ENCODE measurements at regions of chr3 and their contacts with region 1.

Region 1: DNA sequence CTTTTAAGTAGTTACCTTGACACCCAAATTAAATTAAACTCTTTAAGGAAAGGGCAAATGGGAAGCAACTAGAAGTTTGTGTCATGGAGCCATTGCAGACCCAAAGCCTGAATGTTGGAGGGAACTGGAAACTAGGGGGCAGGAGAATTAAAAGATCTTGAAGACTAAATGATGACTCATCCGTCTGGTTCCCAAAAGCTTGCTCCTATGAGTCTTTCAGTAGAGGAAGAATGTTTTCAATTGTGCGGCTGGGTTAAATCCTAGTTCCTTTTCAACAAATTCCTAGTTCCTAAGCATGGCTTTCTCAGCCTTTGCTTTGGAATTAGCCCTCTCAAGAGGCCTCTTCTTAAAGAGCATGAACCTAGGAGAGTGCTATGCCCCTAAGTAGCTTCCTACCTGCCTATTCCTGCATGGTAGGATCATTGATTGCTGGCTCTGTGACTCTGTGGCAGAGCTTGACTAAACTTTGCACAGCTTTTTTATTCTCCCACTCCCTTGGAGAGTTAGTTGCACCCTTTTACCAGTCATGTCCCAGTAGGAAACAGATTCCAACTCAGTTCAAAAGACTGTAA is 17.7 kb downstream of the CLEC3B start:
- DNase-seq: peak; percentile 78
- H3K4me3 Mint-ChIP-seq: no peak overlapping the region
- H3K27ac Mint-ChIP-seq: no peak overlapping the region
- H3K4me1 Mint-ChIP-seq: peaks cover 9% of the 10 kb centered on the region
- H3K27me3 Mint-ChIP-seq: no peaks in the 10 kb centered on the region
- CTCF ChIP-seq: no peak

Region 2: GRCh38 chr3:44065311-44066094 is 978.3 kb before region 1 on chr3:
- CTCF ChIA-PET with region 1: no interaction called
- POLR2A ChIA-PET with region 1: no interaction called
- intact Hi-C with region 1: no loop called
- DNase-seq: peak; percentile 96
- H3K4me3 Mint-ChIP-seq: no peak overlapping the region
- H3K27ac Mint-ChIP-seq: no peak overlapping the region
- H3K4me1 Mint-ChIP-seq: peaks cover 24% of the 10 kb centered on the region
- H3K27me3 Mint-ChIP-seq: no peaks in the 10 kb centered on the region
- CTCF ChIP-seq: no peak

Region 3: DNA sequence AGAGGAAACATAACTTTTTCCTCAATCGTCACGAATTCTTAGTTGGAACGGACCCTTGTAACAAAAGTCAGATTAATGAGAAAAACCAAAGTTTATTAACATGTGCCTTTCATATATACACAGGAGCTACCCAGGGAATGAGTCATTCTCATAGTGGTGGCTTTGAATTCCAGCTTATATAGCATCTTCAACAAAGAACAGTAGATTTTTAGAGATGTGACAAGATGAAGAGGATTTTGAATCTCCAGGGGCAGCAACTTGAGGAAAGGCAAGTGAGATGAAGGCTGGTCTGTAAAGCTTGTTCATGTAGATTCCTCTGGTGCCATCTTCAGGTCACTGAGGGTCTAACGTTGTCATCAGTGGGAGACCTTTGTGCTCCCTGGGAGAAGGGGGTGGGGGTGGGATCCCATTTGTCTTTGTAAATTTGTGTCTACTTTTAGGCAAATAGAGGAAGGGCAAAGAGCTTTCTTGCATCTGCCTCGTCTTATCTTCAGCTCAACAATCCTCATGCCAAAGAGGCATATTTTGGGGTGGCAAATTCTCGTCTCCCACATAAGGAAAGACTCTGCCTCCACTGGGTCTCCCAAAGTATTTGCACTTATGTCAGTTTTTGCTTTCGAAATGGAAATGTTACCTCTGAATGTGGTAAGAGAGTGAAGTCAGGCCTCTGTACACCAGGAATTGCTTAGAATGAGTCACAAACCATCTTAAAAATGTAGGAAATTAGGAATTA is 11.8 kb after region 1 on chr3:
- CTCF ChIA-PET with region 1: interaction called, 25 read pairs
- POLR2A ChIA-PET with region 1: interaction called, 37 read pairs
- intact Hi-C with region 1: no loop called
- DNase-seq: peak; percentile 51
- H3K4me3 Mint-ChIP-seq: no peak overlapping the region
- H3K27ac Mint-ChIP-seq: peak overlapping the region; percentile 43
- H3K4me1 Mint-ChIP-seq: peaks cover 49% of the 10 kb centered on the region
- H3K27me3 Mint-ChIP-seq: no peaks in the 10 kb centered on the region
- CTCF ChIP-seq: peak; percentile 11

Region 4: DNA sequence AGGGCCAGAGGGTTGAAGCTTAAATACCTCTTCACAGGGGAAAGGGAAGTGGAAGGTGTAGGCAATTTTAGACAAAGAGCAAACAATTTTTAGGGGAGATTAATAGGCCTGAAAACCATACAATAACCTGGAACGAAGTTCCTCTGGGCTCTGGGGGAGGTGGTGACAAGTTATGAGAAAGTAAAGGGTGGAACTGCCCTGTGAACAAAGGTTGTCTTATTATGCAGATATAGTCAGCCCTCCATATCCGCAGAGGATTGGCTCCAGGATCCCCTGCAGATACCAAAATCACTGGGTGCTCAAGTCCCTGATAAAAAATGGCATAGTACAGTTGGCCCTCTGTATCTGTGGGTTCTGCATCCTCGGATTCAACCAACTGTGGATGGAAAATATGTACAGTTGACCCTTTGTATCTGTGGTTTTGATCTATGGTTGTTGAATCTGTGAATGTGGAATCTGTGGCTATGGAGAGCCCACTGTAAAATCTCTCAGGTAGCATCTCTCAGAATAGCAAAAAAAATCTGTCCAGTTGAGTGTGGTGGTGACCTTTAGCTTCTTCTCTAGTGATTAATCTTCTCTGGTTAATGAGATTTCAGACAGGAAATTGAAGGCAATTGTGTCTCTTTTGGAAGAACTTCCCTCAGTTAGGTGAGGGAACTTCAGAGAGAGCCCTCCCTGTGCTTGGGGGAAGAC is 22.4 kb after region 1 on chr3:
- CTCF ChIA-PET with region 1: no interaction called
- POLR2A ChIA-PET with region 1: no interaction called
- intact Hi-C with region 1: no loop called
- DNase-seq: no peak
- H3K4me3 Mint-ChIP-seq: no peak overlapping the region
- H3K27ac Mint-ChIP-seq: no peak overlapping the region
- H3K4me1 Mint-ChIP-seq: peaks cover 10% of the 10 kb centered on the region
- H3K27me3 Mint-ChIP-seq: no peaks in the 10 kb centered on the region
- CTCF ChIP-seq: no peak

Region 5: DNA sequence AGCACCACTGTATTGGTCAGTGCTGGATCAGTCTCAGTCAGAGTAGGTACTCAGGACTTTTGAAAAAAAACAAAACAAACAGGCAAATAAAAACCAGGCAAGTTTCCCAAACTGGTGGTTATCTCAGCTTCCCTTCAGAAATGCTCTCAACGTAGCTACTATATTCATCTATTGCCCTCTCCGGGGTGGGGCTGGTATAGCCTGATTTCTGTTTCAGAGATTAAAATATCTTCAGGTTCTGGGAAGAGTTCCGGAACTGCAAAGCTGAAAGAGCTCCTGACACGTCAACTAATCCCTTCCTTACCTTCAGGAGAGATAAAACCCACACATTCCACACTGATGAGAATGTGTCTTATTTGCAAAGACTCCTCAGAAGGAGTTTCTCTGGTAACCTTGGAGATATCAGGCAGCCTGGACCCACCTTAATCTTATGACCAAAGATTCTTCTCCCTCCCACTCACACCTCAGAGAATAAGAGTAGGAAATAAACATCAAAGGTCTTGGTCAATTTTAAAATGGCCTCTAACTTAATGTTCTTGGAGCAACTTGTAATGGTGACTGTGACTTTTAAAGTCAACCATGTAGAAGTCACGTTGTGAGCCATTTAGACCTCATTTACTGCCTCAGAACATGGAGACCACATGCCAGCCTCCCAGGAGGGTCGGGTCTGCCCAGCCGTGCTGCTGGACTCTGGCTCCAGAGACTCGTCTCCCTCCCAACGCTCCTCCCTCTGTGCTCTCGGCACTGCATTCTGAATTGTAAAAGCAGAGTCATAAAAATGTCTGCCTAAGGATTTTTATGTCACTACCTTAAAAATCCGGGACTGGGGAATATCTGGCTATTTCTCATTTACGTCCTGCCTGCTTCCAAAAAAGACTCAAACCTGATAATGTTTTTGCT is 48.6 kb after region 1 on chr3:
- CTCF ChIA-PET with region 1: interaction called, 27 read pairs
- POLR2A ChIA-PET with region 1: interaction called, 3 read pairs
- intact Hi-C with region 1: loop called (anchors 1 kb)
- DNase-seq: peak; percentile 71
- H3K4me3 Mint-ChIP-seq: no peak overlapping the region
- H3K27ac Mint-ChIP-seq: peak overlapping the region; percentile 87
- H3K4me1 Mint-ChIP-seq: peaks cover 18% of the 10 kb centered on the region
- H3K27me3 Mint-ChIP-seq: no peaks in the 10 kb centered on the region
- CTCF ChIP-seq: no peak

Region 6: DNA sequence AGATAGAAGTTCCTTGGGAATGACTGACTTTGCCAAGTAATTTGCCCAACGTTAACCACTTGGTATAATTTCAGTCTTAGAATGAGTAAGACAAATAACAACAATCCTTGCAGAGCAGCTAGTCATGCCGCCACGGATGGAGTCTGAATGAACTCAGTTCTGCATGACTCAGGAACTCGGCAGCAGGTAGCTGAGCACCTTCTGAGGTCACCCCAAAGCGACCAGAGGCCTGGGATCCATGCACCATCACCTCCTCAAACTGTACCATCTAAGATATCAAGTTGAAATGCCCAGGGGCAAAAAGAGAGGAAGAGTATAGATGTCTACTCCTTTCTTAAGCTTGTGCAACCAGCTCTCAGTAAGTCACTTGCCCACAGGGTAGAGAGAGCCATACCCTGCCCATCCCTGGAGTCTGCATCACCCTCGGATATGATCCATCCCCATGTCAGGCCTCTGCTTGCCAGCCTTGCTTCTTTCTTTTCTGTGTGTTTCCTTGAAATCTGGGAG is 110.9 kb after region 1 on chr3:
- CTCF ChIA-PET with region 1: interaction called, 11 read pairs
- POLR2A ChIA-PET with region 1: no interaction called
- intact Hi-C with region 1: no loop called
- DNase-seq: peak; percentile 75
- H3K4me3 Mint-ChIP-seq: no peak overlapping the region
- H3K27ac Mint-ChIP-seq: peak overlapping the region; percentile 63
- H3K4me1 Mint-ChIP-seq: peaks cover 12% of the 10 kb centered on the region
- H3K27me3 Mint-ChIP-seq: no peaks in the 10 kb centered on the region
- CTCF ChIP-seq: no peak

Region 7: DNA sequence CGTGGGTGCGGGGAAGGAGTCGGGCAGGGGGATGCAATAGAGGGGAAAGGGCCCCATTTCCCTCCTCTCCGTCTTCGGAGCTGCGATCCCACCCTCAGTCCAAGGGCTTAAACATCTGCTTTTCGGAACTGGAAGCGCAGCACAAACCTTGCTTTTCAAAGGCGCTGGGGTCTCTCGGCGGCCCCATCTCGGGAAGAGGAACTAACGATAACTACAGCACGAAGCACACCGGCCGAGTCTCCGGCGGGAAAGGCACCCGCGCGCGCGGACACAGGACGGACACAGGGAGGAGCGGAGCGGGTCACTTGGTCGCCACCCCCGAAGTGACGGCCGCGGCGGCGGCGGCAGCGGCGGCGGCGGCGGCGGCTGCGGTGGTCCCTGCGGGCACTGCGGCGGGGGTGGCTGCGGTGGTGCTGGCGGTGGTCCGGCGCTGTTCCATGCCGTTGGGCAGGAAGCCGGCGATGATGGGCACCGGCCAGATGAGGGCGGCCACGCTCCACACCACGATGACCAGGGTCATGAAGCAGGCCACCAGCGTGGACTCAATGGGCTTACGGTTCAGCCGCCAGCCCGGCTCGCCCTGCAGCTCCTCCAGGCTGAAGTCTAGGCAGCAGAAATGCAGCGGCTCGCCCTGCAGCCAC is 181.1 kb after region 1 on chr3:
- CTCF ChIA-PET with region 1: interaction called, 368 read pairs
- POLR2A ChIA-PET with region 1: interaction called, 4 read pairs
- intact Hi-C with region 1: no loop called
- DNase-seq: peak; percentile 67
- H3K4me3 Mint-ChIP-seq: peak overlapping the region; percentile 77
- H3K27ac Mint-ChIP-seq: no peak overlapping the region
- H3K4me1 Mint-ChIP-seq: peaks cover 6% of the 10 kb centered on the region
- H3K27me3 Mint-ChIP-seq: peaks cover 29% of the 10 kb centered on the region
- CTCF ChIP-seq: peak; percentile 64

Region 8: DNA sequence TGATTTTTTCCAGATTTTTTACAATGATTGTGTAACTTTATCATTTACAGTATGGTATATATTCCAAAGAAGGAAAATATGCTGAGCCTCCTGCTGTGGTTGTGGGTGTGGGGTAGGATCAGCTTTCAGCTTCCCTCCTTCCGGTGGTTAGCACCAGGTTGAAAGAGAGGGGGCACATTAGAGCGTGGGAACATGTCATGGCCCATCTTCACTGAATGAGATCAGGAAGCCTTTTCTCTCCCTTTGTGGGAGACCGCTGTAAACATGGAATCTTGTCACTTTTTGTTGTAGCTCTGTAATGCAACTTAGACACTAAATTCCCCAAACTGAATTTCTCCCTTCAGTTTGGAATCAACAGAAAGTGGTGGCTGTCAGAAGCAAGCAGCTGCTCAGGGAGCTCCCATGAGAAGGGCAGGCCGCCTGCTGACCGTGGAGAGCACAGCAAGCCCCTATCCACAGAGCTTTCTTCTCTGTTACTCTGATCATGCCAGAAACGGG is 464.1 kb after region 1 on chr3:
- CTCF ChIA-PET with region 1: interaction called, 14 read pairs
- POLR2A ChIA-PET with region 1: no interaction called
- intact Hi-C with region 1: loop called (anchors 5 kb)
- DNase-seq: no peak
- H3K4me3 Mint-ChIP-seq: no peak overlapping the region
- H3K27ac Mint-ChIP-seq: no peak overlapping the region
- H3K4me1 Mint-ChIP-seq: no peaks in the 10 kb centered on the region
- H3K27me3 Mint-ChIP-seq: no peaks in the 10 kb centered on the region
- CTCF ChIP-seq: no peak

Measured in MCF 10A (cell line).